AG04449 (cell line): ENCODE measurements at regions of chr13 and their contacts with region 1.

Region 1: DNA sequence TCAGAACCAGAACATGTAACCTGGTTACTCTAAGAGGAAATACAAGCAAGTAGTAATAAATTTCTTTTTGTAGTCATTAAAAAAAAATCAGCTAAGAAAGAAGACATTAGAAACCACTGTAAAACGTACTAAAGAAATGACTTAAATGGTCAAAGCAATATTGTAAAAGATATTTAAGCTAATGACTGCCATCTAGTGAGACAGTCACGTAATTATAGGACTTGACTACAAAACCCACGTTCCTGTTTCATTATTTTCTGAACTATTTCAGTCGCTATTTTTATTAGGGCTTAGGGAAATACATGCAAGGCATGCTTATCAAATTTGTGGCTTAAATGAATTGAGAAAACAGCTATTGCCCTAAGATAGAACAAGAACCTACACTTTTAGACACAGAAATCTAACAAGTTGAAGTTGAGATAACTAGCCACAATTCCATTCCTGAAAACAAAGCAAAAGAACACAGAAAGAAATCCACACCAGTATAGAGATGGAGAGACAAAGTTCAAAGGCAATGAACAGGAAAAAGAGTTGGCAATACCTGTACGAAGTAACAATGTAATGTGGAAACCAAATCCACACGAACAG is 17.9 kb downstream of the ALG5 start:
- DNase-seq: no peak
- H3K4me3 ChIP-seq: no peak overlapping the region
- CTCF ChIP-seq: peak; percentile 23

Region 2: GRCh38 chr13:35978603-35979316 is 1002.5 kb before region 1 on chr13:
- CTCF ChIA-PET with region 1: interaction called, 15 read pairs
- POLR2A ChIA-PET with region 1: no interaction called
- DNase-seq: no peak
- H3K4me3 ChIP-seq: no peak overlapping the region
- CTCF ChIP-seq: peak; percentile 46

Region 3: DNA sequence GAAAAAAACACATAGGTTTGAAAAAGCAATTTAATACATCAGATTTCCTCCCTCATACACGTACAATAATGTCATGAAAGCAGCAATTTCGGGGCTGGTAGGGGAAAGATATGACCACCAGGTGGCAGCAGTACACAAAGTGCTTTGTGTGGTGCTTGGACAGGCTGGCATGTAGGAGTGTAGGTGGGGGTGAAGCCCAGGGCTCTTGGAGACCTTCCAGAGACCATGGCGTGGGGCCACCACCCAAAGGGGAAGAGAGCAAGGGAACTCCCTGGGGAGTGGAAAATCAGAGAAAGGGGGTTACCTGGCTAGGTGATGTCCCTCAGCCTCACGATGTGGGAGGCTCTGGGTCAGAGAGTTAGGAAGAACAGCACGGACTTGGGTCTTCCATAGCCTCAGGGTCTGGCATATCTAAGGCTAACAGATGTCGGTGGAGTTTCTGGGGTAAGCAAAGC is 560.8 kb before region 1 on chr13:
- CTCF ChIA-PET with region 1: interaction called, 20 read pairs
- POLR2A ChIA-PET with region 1: no interaction called
- DNase-seq: no peak
- H3K4me3 ChIP-seq: no peak overlapping the region
- CTCF ChIP-seq: peak; percentile 76

Region 4: GRCh38 chr13:36858290-36858689 is 123.0 kb before region 1 on chr13:
- CTCF ChIA-PET with region 1: interaction called, 332 read pairs
- POLR2A ChIA-PET with region 1: no interaction called
- DNase-seq: no peak
- H3K4me3 ChIP-seq: no peak overlapping the region
- CTCF ChIP-seq: peak; percentile 38

Region 5: GRCh38 chr13:36872621-36873020 is 108.6 kb before region 1 on chr13:
- CTCF ChIA-PET with region 1: interaction called, 12 read pairs
- POLR2A ChIA-PET with region 1: no interaction called
- DNase-seq: no peak
- H3K4me3 ChIP-seq: no peak overlapping the region
- CTCF ChIP-seq: no peak

Region 6: GRCh38 chr13:36992340-36992739 is 11.1 kb after region 1 on chr13:
- CTCF ChIA-PET with region 1: interaction called, 72 read pairs
- POLR2A ChIA-PET with region 1: no interaction called
- DNase-seq: no peak
- H3K4me3 ChIP-seq: no peak overlapping the region
- CTCF ChIP-seq: no peak

Region 7: GRCh38 chr13:37074703-37075102 is 93.5 kb after region 1 on chr13:
- CTCF ChIA-PET with region 1: no interaction called
- POLR2A ChIA-PET with region 1: no interaction called
- DNase-seq: no peak
- H3K4me3 ChIP-seq: no peak overlapping the region
- CTCF ChIP-seq: no peak